ENCODE measurements at regions of chr6 and their contacts with region 1.

Region 1: GRCh38 chr6:125995972-125996580 is 9.7 kb downstream of the TRMT11 start:
- DNase-seq: peak; percentile 76
- ATAC-seq: peak; percentile 95
- H3K4me3 Mint-ChIP-seq: peak overlapping the region; percentile 42
- H3K27ac Mint-ChIP-seq: no peak overlapping the region
- H3K4me1 Mint-ChIP-seq: peaks cover 10% of the 10 kb centered on the region
- H3K27me3 Mint-ChIP-seq: no peaks in the 10 kb centered on the region

Region 2: GRCh38 chr6:124283486-124283885 is 1712.6 kb before region 1 on chr6:
- CTCF ChIA-PET with region 1: no interaction called
- POLR2A ChIA-PET with region 1: no interaction called
- DNase-seq: no peak
- ATAC-seq: no peak
- H3K4me3 Mint-ChIP-seq: no peak overlapping the region
- H3K27ac Mint-ChIP-seq: no peak overlapping the region
- H3K4me1 Mint-ChIP-seq: no peaks in the 10 kb centered on the region
- H3K27me3 Mint-ChIP-seq: no peaks in the 10 kb centered on the region

Region 3: DNA sequence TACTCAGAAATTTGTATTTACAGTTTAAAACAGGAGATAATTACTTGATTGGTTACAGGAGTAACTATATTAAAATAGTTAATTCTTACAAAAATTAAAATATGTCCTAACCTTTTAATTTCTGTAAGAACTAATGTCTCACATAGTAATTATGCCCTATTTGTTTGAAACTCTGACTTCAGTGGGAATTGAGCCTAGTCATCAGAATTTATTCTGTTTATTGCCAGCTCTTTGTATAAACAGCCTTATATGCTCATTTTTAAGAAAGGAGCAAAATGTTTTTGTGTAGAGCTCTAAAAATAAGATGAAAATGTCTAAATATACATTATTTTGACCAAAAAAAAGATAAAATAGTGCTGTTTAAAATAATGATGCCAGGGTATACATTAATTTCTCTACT is 11.7 kb after region 1 on chr6:
- CTCF ChIA-PET with region 1: interaction called, 11 read pairs
- POLR2A ChIA-PET with region 1: interaction called, 6 read pairs
- DNase-seq: no peak
- ATAC-seq: no peak
- H3K4me3 Mint-ChIP-seq: no peak overlapping the region
- H3K27ac Mint-ChIP-seq: no peak overlapping the region
- H3K4me1 Mint-ChIP-seq: peaks cover 16% of the 10 kb centered on the region
- H3K27me3 Mint-ChIP-seq: no peaks in the 10 kb centered on the region

Region 4: GRCh38 chr6:126170978-126171382 is 174.9 kb after region 1 on chr6:
- CTCF ChIA-PET with region 1: interaction called, 16 read pairs
- POLR2A ChIA-PET with region 1: no interaction called
- DNase-seq: peak; percentile 49
- ATAC-seq: peak; percentile 55
- H3K4me3 Mint-ChIP-seq: peak overlapping the region; percentile 32
- H3K27ac Mint-ChIP-seq: no peak overlapping the region
- H3K4me1 Mint-ChIP-seq: peaks cover 9% of the 10 kb centered on the region
- H3K27me3 Mint-ChIP-seq: no peaks in the 10 kb centered on the region

Measured in activated CD8-positive, alpha-beta T cell treated with anti-CD3 and anti-CD28 coated beads, Interleukin-2, amount 10 ng/mL, durations not matched to agents 7 days and 5 days (primary cell).